ENCODE measurements at regions of chr17 and their contacts with region 1.

Region 1: DNA sequence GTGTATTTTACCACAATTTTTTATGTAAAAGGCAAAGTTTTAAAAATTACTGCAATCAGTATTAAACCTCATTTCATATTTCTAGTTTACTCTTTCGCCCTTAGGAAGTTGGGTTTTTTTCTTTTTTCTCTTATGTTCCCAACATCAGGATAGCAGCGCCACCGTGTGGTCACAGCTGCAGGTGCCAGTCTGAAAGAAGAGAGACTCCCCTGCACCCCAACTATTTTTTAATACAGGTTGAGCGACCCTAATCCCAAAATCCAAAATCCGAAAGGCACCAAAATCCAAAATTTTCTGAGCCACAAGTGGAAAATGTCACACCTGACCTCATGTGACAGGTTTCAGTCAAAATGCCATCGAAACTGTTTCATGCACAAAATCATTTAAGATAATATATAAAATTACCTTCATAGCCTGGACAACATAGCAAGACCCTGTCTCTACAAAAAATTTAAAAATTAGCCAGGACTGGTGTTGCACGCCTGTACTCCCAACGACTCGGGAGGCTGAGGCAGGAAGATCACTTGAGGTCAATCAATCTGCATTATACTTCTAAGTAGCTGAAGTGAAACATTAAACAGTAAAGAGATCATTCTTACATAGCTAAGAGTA is 21.8 kb upstream of the ASGR2 start:
- DNase-seq: peak; percentile 33
- ATAC-seq: no peak
- H3K4me3 ChIP-seq: no peak overlapping the region
- H3K27ac ChIP-seq: no peak overlapping the region
- H3K4me1 ChIP-seq: peaks cover 18% of the 10 kb centered on the region
- H3K27me3 ChIP-seq: peaks cover 0 to 3% of the 10 kb centered on the region in 2 experiments; a peak in 1 of 4 replicates
- CTCF ChIP-seq: peak; percentile 83 to 91 (median 89)
- EP300 ChIP-seq: no peak
- POLR2A ChIP-seq: no peak
- RAD21 ChIP-seq: peak; percentile 98

Region 2: DNA sequence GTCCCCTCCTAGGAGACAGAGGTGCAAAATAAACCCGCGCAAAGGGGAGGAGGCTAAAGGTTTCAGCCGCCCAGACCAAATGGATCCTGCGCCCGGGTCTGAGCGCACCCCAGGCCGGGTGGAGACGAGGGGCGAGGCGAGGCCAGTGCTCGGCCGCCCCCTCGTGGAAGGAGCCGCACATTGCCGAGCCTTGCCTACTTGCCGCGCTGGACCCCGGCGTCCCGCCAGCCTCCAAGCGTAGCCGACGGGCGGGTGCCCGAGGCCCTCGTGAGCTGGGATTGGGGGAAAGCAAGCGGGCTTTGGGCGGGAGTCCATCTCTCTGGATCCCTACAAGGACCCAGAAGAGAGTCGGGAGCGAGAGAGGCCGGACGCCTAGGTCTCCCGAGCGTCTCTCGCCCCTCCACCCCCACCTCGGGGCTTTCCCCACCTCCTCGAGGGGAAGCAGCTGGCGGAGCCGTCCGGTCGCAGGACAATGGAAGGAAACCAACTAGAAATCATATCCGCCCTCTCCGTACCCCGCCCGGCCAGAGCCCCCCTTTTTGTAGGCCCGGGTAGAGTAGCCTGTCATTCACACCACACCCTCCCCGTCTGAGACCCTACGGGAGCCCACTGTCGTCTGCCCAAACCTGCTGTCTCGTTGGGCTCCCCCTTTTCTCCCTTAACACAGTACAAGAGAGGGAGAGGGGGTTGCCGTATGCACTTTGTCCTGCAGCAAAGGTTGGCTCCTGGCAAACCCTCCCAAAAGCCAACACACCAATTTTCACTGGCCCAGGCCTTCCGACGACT is 114.2 kb before region 1 on chr17:
- CTCF ChIA-PET with region 1: interaction called, 13 read pairs
- POLR2A ChIA-PET with region 1: interaction called, 5 read pairs
- RAD21 ChIA-PET with region 1: interaction called, 10 read pairs
- SMC1A ChIA-PET with region 1: interaction called, 9 read pairs
- in situ Hi-C with region 1: no loop called
- intact Hi-C with region 1: no loop called
- DNase-seq: no peak
- ATAC-seq: peak; percentile 86
- H3K4me3 ChIP-seq: peak overlapping the region; percentile 40; the same call in 1 of the 2 replicates
- H3K27ac ChIP-seq: peak overlapping the region; percentile 18; the same call in 1 of the 2 replicates
- H3K4me1 ChIP-seq: peaks cover 25% of the 10 kb centered on the region
- H3K27me3 ChIP-seq: no peaks in the 10 kb centered on the region
- CTCF ChIP-seq: peak; percentile 93 to 96 (median 96)
- EP300 ChIP-seq: no peak
- POLR2A ChIP-seq: peak; percentile 31; the same call in 1 of the 2 replicates
- RAD21 ChIP-seq: peak; percentile 72

Region 3: GRCh38 chr17:7035591-7036368 is 100.6 kb before region 1 on chr17 and contains the start of gene SLC16A13:
- CTCF ChIA-PET with region 1: interaction called, 590 read pairs
- POLR2A ChIA-PET with region 1: interaction called, 16 read pairs
- RAD21 ChIA-PET with region 1: interaction called, 9 read pairs
- SMC1A ChIA-PET with region 1: interaction called, 3 read pairs
- in situ Hi-C with region 1: no loop called
- intact Hi-C with region 1: no loop called
- DNase-seq: peak; percentile 96
- ATAC-seq: peak; percentile 96
- H3K4me3 ChIP-seq: peak within 1 kb of the TSS; percentile 77
- H3K27ac ChIP-seq: peak within 1 kb of the TSS; percentile 99
- H3K4me1 ChIP-seq: peaks cover 10% of the 10 kb centered on the region
- H3K27me3 ChIP-seq: no peaks in the 10 kb centered on the region
- CTCF ChIP-seq: no peak
- EP300 ChIP-seq: peak in 1 of 2 experiments; percentile 27; a peak in 1 of 4 replicates
- POLR2A ChIP-seq: peak; percentile 95
- RAD21 ChIP-seq: no peak
- polyA plus RNA-seq, gene SLC16A13: 0.34 to 0.46 TPM

Region 4: DNA sequence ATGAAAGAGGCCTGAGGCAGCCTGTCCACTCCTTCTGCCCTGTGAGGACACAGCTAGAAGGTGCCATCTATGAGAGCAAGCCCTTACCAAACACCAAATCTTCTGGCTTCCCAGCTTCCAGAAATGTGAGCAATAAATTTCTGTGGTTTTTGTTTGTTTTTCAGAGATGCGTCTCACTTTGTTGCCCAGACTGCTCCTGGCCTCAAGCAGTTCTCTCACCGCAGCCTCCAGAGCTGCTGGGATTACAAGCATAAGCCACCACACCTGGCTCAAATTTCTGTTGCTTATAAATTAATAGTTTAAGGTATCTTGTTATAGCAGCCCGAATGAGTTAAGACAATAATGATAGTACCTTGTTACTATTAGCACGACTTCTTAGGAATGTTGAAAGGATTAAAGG is 80.0 kb before region 1 on chr17:
- CTCF ChIA-PET with region 1: interaction called, 590 read pairs
- POLR2A ChIA-PET with region 1: interaction called, 11 read pairs
- RAD21 ChIA-PET with region 1: interaction called, 269 read pairs
- SMC1A ChIA-PET with region 1: interaction called, 356 read pairs
- in situ Hi-C with region 1: loop called (anchors 5 kb)
- intact Hi-C with region 1: loop called (anchors 1 kb)
- DNase-seq: no peak
- ATAC-seq: no peak
- H3K4me3 ChIP-seq: no peak overlapping the region
- H3K27ac ChIP-seq: no peak overlapping the region
- H3K4me1 ChIP-seq: no peaks in the 10 kb centered on the region
- H3K27me3 ChIP-seq: no peaks in the 10 kb centered on the region
- CTCF ChIP-seq: no peak
- EP300 ChIP-seq: no peak
- POLR2A ChIP-seq: no peak
- RAD21 ChIP-seq: no peak

Region 5: DNA sequence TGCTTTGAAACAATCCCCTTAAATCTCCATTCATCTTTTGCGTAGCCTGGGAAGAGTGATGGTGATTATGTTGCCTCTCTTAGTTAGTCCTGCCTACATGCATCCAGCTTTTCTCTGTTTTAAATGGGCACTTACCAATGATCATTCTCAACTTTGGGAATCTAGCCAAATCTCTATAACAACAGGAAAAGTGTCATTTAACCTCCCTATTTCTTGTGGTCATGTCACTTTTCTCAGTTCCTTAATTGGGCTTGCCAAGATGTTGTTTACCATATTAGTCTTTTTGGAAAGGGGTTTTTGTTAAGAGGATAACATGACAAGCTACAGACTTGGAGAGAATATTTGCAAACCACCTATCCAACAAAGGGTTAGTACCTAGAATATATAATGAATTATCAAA is 40.7 kb before region 1 on chr17:
- CTCF ChIA-PET with region 1: interaction called, 13 read pairs
- POLR2A ChIA-PET with region 1: no interaction called
- RAD21 ChIA-PET with region 1: interaction called, 11 read pairs
- SMC1A ChIA-PET with region 1: interaction called, 9 read pairs
- in situ Hi-C with region 1: no loop called
- intact Hi-C with region 1: loop called (anchors 2 kb)
- DNase-seq: peak; percentile 54
- ATAC-seq: peak; percentile 83
- H3K4me3 ChIP-seq: no peak overlapping the region
- H3K27ac ChIP-seq: no peak overlapping the region; the same call in 1 of the 2 replicates
- H3K4me1 ChIP-seq: peaks cover 18% of the 10 kb centered on the region
- H3K27me3 ChIP-seq: no peaks in the 10 kb centered on the region
- CTCF ChIP-seq: no peak
- EP300 ChIP-seq: peak; percentile 63 to 76; a peak in 2 of 4 replicates
- POLR2A ChIP-seq: no peak
- RAD21 ChIP-seq: no peak

Region 6: DNA sequence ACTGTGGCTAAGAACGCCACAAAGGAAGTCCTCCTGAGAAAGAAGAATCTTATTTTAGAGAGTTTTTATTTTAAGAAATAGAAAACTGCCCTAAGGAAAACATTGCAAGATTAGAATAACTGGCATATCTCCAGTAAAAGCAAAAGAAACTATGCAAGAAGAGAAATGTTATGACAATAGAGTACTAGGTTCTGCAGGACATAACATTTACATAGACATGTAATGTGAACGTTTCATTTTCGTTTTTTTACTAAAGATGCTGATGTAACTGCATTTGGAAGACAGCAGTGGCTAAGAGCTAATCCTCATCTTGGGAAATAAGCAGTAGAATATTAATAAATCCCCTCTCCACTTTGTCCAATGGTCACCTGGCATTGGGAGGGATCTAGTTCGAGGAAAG is 14.0 kb before region 1 on chr17:
- CTCF ChIA-PET with region 1: interaction called, 18 read pairs
- POLR2A ChIA-PET with region 1: interaction called, 7 read pairs
- RAD21 ChIA-PET with region 1: interaction called, 10 read pairs
- SMC1A ChIA-PET with region 1: interaction called, 25 read pairs
- in situ Hi-C with region 1: no loop called
- intact Hi-C with region 1: no loop called
- DNase-seq: no peak
- ATAC-seq: peak; percentile 56
- H3K4me3 ChIP-seq: 0 out of 2 replicates have a peak overlapping the region, but pooled peaks have one; percentile 10
- H3K27ac ChIP-seq: peak overlapping the region; percentile 22; the same call in 1 of the 2 replicates
- H3K4me1 ChIP-seq: peaks cover 15% of the 10 kb centered on the region
- H3K27me3 ChIP-seq: no peaks in the 10 kb centered on the region
- CTCF ChIP-seq: no peak
- EP300 ChIP-seq: no peak
- POLR2A ChIP-seq: no peak
- RAD21 ChIP-seq: no peak